MCF 10A (cell line): ENCODE measurements at regions of chr16 and their contacts with region 1.

Region 1: DNA sequence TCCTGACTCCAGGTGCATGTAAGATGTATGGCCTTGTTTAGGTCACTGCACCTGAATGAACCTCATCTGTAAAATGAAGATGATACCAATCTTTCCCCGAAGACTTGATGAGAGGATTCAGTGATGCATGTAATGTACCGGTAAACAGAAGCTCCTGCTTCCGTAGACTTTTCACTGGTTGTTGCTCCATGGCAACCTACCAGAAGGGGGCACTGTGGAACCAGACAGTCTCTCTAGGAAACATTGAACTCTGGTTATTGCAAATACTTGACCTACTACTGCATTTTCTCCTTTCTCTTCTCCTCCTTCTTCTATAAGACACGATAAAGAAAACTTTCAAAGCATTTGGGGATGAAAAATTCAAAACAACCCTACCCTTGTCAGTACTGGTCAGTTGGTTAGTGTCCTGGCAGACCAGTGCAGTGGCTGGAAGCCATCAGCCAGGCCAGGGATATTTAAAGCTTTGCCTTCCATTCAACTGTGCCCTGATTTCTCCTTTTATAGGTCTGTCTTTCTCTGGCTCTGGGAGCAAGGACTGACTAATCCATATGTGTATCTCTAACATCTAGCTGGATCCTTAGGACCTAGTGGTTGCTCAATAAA is 667.4 kb upstream of the SALL1 start:
- DNase-seq: peak; percentile 69
- H3K4me3 Mint-ChIP-seq: no peak overlapping the region
- H3K27ac Mint-ChIP-seq: no peak overlapping the region
- H3K4me1 Mint-ChIP-seq: peaks cover 7% of the 10 kb centered on the region
- H3K27me3 Mint-ChIP-seq: no peaks in the 10 kb centered on the region
- CTCF ChIP-seq: peak; percentile 77

Region 2: GRCh38 chr16:51801635-51802034 is 16.8 kb before region 1 on chr16:
- CTCF ChIA-PET with region 1: interaction called, 12 read pairs
- POLR2A ChIA-PET with region 1: no interaction called
- intact Hi-C with region 1: no loop called
- DNase-seq: no peak
- H3K4me3 Mint-ChIP-seq: no peak overlapping the region
- H3K27ac Mint-ChIP-seq: no peak overlapping the region
- H3K4me1 Mint-ChIP-seq: no peaks in the 10 kb centered on the region
- H3K27me3 Mint-ChIP-seq: no peaks in the 10 kb centered on the region
- CTCF ChIP-seq: no peak

Region 3: GRCh38 chr16:51952500-51952899 is 134.1 kb after region 1 on chr16:
- CTCF ChIA-PET with region 1: interaction called, 10 read pairs
- POLR2A ChIA-PET with region 1: no interaction called
- intact Hi-C with region 1: no loop called
- DNase-seq: no peak
- H3K4me3 Mint-ChIP-seq: no peak overlapping the region
- H3K27ac Mint-ChIP-seq: no peak overlapping the region
- H3K4me1 Mint-ChIP-seq: no peaks in the 10 kb centered on the region
- H3K27me3 Mint-ChIP-seq: no peaks in the 10 kb centered on the region
- CTCF ChIP-seq: no peak

Region 4: GRCh38 chr16:51971184-51971583 is 152.7 kb after region 1 on chr16:
- CTCF ChIA-PET with region 1: interaction called, 63 read pairs
- POLR2A ChIA-PET with region 1: no interaction called
- intact Hi-C with region 1: loop called (anchors 1 kb)
- DNase-seq: peak; percentile 54
- H3K4me3 Mint-ChIP-seq: no peak overlapping the region
- H3K27ac Mint-ChIP-seq: no peak overlapping the region
- H3K4me1 Mint-ChIP-seq: peaks cover 6% of the 10 kb centered on the region
- H3K27me3 Mint-ChIP-seq: peaks cover 4% of the 10 kb centered on the region
- CTCF ChIP-seq: peak; percentile 59

Region 5: DNA sequence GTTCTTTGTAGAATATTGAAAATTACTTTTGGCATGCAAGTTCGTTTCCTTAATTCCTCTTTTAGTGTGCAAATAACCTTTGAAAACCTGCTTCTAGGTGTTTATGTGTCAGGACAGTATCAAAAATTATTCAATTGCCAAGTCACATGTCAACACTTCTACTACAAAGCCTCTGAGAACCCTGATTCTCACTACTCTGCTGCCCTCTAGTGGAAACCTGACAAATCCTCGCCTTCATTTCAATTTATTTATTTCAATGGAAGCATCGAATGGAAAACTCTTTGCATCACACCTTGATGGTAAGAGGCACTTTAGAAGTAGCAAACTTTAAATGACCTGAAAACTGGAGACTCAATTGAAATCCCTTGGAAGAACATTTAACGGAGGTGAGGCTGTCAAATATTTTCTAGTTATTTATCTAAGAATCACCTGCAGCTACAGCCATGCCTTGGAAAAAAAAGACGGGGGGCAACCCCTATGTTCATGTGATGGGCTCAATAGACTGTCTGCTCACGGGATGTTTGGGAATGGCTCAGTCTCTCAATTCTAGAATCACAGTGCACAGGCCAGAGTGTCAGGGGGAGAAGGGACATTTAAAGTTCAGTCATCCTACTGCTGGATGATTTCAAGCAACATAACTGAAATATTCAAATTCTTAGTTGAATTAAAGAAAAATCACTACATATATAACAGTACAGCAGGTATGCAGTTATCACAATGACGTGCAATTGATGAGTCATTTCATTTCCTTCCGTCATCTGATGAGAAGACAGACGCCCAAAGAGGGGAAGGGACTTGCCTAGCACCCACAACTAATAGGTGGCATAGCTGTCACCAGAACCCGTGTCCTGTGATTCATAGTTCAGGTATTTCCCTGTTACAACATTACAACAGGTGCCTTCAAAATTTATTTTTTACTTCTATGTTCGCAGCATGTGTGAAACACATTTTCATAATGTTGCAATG is 164.6 kb after region 1 on chr16:
- CTCF ChIA-PET with region 1: interaction called, 88 read pairs
- POLR2A ChIA-PET with region 1: no interaction called
- intact Hi-C with region 1: loop called (anchors 1 kb)
- DNase-seq: peak; percentile 76
- H3K4me3 Mint-ChIP-seq: no peak overlapping the region
- H3K27ac Mint-ChIP-seq: no peak overlapping the region
- H3K4me1 Mint-ChIP-seq: peaks cover 6% of the 10 kb centered on the region
- H3K27me3 Mint-ChIP-seq: no peaks in the 10 kb centered on the region
- CTCF ChIP-seq: peak; percentile 60